Activated T-helper 2 cell treated with anti-CD3 and anti-CD28 coated beads, Interferon-gamma antibody, Interleukin-2, Interleukin-4, amounts not matched to agents 10 μg/mL and 5 μg/mL and 100 μg/mL, durations not matched to agents 14 hours and 24 hours and 36 hours (primary cell): ENCODE measurements at regions of chr2 and their contacts with region 1.

Region 1: DNA sequence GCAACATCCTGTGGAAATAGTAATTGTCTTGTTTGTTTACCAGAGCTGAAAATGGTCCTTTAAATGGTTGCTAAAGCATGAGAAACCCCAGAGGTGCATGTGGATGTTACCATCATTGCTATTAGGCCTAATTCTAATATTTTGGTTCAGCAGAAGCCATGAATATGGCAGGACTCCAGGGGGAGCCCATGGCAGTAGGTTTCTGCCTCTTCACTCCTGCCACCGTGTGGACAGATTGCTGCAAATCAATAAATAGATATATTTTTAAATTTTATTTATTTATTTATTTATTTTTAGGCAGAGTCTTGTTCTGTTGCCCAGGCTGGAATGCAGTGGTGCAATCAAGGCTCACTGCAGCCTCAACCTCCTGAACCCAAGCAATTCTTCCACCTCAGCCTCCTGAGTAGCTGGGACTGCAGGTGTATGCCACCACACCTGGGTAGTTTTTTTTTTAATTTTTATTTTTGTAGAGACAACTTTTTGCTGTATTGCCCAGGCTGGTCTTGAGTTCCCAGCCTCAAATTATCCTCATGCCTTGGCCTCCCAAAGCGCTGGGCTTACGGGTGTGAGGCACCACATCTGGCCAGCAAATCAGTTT is 54.9 kb upstream of the CAPN13 start:
- DNase-seq: peak; percentile 25
- H3K4me3 Mint-ChIP-seq: no peak overlapping the region
- H3K27ac Mint-ChIP-seq: no peak overlapping the region
- H3K4me1 Mint-ChIP-seq: peaks cover 14% of the 10 kb centered on the region
- H3K27me3 Mint-ChIP-seq: no peaks in the 10 kb centered on the region

Region 2: GRCh38 chr2:30721668-30722647 is 140.2 kb before region 1 on chr2:
- intact Hi-C with region 1: no loop called
- DNase-seq: no peak
- H3K4me3 Mint-ChIP-seq: no peak overlapping the region
- H3K27ac Mint-ChIP-seq: no peak overlapping the region
- H3K4me1 Mint-ChIP-seq: no peaks in the 10 kb centered on the region
- H3K27me3 Mint-ChIP-seq: peaks cover 20% of the 10 kb centered on the region

Region 3: GRCh38 chr2:30894498-30895119 is 32.5 kb after region 1 on chr2:
- intact Hi-C with region 1: no loop called
- DNase-seq: no peak
- H3K4me3 Mint-ChIP-seq: no peak overlapping the region
- H3K27ac Mint-ChIP-seq: no peak overlapping the region
- H3K4me1 Mint-ChIP-seq: no peaks in the 10 kb centered on the region
- H3K27me3 Mint-ChIP-seq: peaks cover 3% of the 10 kb centered on the region

Region 4: DNA sequence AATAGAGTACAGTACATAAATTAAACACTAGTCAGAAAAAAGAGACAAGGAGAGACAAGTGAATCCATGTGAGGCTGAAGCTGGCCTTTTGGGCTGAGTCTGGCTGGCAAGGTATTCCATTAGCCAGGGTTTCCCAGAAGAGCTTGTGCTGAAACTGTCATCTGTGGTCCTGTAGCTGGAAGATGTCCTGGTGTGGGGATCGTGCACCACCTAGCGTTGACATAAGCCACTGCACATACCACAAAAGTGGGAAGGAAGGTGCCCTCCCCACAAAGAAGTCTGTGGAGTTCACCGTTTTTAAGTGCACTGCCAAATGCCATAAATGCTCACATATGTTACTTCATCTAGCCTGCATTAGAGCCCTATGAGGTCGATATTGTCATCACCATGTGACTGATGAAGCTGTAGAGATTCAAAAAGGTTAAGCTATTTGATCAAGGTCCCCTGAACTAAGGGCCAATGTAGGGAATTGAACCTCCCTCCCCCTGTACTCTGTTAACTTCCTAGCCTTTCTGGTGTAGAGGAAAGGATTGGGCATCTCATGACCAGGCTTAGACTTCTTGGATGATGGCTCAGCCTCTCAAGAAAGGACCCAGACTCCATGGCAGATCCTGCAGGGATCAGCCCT is 308.0 kb after region 1 on chr2:
- intact Hi-C with region 1: loop called (anchors 10 kb)
- DNase-seq: peak; percentile 28
- H3K4me3 Mint-ChIP-seq: no peak overlapping the region
- H3K27ac Mint-ChIP-seq: no peak overlapping the region
- H3K4me1 Mint-ChIP-seq: peaks cover under 1% of the 10 kb centered on the region
- H3K27me3 Mint-ChIP-seq: peaks cover 9% of the 10 kb centered on the region